Activated CD4-positive, alpha-beta T cell treated with anti-CD3 and anti-CD28 coated beads, Interleukin-2, amount 10 ng/mL, durations not matched to agents 24 days and 14 days (primary cell): ENCODE measurements at regions of chr3 and their contacts with region 1.

Region 1: DNA sequence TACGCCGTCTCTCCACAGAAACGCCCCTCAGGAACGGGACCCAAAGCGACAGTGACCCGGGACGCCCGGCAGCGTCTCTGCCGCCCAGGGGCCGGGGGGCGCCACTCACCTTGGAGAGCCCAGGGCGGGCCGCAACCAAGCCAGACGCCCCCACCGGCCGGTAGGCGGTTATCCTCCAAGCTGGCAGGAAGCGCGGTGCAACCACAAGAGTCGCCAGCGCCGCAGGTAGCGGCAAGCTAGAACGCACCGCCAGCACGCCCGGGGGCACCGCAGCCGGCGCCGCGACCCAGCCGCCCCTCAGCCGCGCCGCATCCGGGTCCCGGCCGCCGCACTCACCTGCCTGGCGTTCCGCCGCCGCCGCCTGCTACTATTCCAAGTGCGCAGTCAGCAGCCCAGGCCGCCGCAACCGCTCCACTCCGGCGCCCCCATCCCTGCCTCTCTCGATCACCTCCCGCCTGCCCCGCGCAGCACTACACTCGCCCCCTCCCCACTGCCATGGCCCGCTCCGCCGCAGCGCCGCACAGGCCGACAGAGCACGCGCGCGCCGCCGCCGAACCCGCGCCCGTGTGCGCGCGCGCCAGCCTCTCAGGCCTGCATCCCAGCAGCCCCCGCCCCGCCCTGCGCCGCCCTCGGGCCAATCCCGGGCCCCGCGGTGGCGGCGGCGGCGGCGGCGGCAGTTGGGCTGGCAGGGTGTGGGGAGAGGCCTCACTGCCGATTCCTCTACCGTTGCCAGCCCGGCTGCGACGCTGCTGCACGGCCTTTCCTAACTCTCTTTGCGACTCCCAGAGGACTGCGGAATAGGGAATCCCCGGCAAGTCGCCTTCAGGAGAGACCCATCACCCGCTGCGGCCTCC is at the start of gene PIK3CB:
- DNase-seq: peak; percentile 96
- H3K4me3 Mint-ChIP-seq: peak within 1 kb of the TSS; percentile 93
- H3K27ac Mint-ChIP-seq: peak within 1 kb of the TSS; percentile 93
- H3K4me1 Mint-ChIP-seq: peaks cover 20% of the 10 kb centered on the region
- H3K27me3 Mint-ChIP-seq: no peaks in the 10 kb centered on the region
- total RNA-seq, gene PIK3CB: 17.6 and 18.1 TPM in 2 replicates

Region 2: DNA sequence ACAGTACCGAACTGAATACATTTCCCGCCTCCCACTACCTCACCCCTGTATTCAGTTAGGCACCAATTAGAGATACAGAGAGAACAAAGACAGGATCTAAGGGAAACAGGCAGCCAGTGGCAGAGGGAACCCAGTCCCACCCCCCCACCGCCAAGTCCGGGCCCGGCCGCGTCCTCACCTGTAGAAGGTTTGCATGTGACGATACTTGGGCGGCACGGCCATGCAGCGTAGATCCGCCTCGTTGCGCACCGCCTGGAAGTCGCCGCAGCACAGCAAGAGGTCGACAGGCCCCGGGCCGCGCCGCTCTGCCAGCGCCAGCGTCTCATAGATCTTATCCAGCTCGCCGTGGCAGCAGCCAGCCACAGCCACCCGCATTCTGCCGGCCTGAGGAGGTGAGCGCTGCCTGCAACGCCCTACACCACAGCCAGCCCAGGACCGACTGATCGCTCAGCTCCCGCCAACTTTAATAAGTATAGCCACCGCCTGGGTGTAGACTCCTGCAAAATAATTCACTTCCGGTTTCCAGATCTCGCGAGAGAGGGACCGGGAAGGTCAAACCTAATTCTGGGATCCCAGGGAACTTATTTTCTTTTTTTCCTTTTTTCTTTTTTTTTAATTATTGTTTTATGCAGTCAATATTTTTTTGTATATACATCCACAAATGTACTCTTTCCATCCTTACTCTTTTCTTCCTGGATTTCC is 660.0 kb before region 1 on chr3 and contains the start of gene DBR1:
- intact Hi-C with region 1: loop called (anchors 2 kb)
- DNase-seq: peak; percentile 93
- H3K4me3 Mint-ChIP-seq: peak within 1 kb of the TSS; percentile 98
- H3K27ac Mint-ChIP-seq: peak within 1 kb of the TSS; percentile 94
- H3K4me1 Mint-ChIP-seq: peaks cover 29% of the 10 kb centered on the region
- H3K27me3 Mint-ChIP-seq: peaks cover 3% of the 10 kb centered on the region
- total RNA-seq, gene DBR1: 27.3 and 28.3 TPM in 2 replicates

Region 3: DNA sequence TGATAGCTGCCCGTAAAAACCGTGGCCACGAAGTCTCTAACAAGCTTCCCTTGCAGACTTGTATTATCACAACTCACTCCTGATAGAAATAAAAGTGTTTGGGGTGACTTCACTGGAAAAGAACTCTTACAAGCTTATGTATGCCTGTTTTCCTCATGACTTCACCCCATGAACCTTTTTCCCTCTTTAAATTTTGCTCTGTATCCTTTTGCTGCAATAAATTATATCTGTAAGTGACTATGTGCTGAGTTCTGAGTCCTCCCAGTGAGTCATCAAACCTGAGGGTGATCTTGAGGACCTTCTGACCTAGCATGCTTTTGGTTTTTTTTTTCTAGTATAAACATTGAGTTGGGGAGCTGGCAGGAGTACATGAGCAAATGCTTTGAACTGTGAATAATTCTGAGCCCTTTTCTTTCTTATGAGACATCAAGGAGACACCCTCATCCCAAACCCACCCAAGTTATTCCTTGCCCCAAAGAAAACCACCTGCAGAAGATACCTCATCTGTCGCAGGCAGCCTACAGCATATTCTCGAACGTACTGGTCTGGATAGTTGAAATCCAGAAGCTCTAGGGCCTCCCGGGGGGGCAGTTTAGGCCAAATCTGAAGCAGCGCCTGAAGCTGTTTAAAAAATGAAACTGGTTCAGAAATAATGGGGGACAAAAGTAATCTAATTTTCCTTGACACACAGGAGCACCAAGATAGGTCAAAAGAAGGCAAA is 140.1 kb before region 1 on chr3:
- intact Hi-C with region 1: loop called (anchors 10 kb)
- DNase-seq: no peak
- H3K4me3 Mint-ChIP-seq: no peak overlapping the region
- H3K27ac Mint-ChIP-seq: no peak overlapping the region
- H3K4me1 Mint-ChIP-seq: no peaks in the 10 kb centered on the region
- H3K27me3 Mint-ChIP-seq: no peaks in the 10 kb centered on the region

Region 4: GRCh38 chr3:138781012-138781470 is 53.5 kb before region 1 on chr3:
- intact Hi-C with region 1: loop called (anchors 2 kb)
- DNase-seq: peak; percentile 88
- H3K4me3 Mint-ChIP-seq: peak overlapping the region; percentile 22
- H3K27ac Mint-ChIP-seq: peak overlapping the region; percentile 70
- H3K4me1 Mint-ChIP-seq: peaks cover 21% of the 10 kb centered on the region
- H3K27me3 Mint-ChIP-seq: no peaks in the 10 kb centered on the region

Region 5: DNA sequence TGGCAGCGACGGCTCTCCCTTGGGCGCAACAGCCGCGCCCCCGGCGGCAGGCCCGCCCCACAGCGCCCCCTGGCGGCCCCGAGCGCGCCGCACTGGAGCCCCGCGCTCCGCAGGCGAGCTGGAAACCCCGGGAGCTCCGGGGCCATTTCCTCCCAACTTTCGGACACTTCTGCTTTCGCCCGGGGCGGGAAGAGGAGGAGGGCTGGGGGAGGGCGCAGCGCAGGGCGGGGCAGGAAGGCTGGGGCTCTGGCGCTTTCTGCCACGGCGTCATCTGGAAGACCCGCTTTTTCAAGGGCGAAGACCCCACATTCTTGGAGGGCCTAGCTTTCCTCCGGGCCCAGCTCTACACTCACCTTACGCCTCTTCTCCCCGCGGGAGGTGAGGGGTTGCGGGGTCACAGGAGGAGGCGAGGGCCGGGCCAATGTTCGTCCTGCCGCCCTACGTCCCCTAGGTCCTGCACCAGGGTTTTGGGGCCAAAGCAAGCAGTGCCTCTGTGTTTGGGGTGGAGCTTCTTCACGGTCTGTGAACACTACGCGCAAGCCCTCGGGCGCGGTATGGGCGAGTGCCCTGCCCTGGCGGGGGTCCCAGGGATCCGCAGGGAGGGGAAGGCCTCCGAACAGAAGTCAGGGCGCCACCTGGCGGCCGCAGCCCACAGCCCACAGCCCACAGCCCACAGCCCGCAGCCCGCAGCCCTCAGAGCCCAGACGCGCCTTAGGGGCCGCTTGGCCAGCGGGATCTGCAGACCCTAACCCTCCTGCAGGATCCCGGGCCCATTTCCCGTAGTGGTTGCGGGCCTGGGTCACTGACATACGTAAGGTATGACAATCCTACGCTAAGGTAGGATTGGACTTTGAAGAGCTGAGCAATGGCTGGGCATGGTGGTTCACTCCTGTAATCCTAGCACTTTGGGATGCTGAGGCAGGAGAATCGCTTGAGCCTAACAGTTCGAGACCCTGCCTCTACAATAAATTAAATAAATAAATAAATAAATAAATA is 81.2 kb after region 1 on chr3:
- intact Hi-C with region 1: loop called (anchors 1 kb)
- DNase-seq: peak; percentile 94
- H3K4me3 Mint-ChIP-seq: peak overlapping the region; percentile 88
- H3K27ac Mint-ChIP-seq: peak overlapping the region; percentile 76
- H3K4me1 Mint-ChIP-seq: peaks cover 6% of the 10 kb centered on the region
- H3K27me3 Mint-ChIP-seq: peaks cover 17% of the 10 kb centered on the region